ENCODE measurements at regions of chr4 and their contacts with region 1.

Region 1: GRCh38 chr4:103773691-103774231 is 54.0 kb upstream of the TACR3 start:
- DNase-seq: no peak

Region 2: GRCh38 chr4:103757631-103758030 is 16.1 kb before region 1 on chr4:
- intact Hi-C with region 1: loop called in 1 of 2 experiments (anchors 1 kb)
- DNase-seq: no peak

Region 3: GRCh38 chr4:104519588-104519987 is 745.8 kb after region 1 on chr4:
- intact Hi-C with region 1: no loop called
- DNase-seq: no peak

Measured in posterior vena cava (tissue), 2 donors.